ENCODE measurements at regions of chr18 and their contacts with region 1.

Region 1: DNA sequence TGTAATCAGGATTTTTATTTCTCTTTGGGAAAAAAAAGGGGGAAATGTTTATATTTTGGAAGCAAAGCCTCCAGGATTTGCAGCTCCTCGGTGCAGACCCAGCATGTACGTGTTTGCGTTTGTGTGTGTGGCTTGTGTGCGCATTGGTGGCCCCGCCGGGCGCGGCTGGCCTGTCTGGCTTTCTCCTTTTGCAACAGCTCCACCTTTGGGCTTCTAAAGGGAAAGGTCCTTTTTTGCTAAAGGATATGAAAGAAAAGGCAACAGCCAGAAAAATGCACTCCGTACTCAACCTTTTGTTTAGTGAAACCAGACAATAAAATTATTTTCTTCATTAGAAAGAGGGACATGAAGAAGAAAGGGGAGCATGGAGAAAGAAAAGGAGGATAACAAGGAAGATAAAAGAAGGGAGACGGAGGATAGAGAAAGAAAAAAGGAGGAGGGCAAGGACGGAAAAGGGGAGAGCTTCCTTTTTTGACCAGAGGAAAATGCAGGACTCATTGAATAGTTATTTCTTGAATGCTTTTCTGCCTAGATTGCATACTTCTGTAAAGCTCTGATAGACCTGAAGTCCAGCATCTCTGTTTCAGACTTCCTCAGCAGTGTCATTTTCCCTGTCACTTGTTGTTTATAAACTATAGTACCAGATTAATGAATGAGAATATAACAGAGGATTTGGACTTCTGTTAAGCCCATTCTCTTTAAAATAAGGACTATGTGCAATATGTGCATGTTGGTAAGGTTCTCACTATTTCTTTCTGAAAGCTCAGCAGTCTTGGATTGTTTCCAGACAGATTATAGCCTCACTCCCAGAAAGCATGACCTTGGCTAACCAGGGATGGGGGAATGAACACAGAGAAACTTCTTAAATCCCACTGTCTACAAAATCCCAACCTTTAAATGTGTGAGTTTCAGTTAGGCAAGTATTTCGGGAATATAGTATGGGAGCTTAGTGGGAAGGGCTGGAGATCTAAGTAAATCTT is 563.1 kb upstream of the PIK3C3 start:
- DNase-seq: peak in 3 of 5 donors; percentile 7 to 67 (median 59)
- ATAC-seq: peak; percentile 66 to 77 (median 70)
- H3K4me3 ChIP-seq: peak overlapping the region in 6 of 12 donors; percentile 27 to 45 (median 30)
- H3K27ac ChIP-seq: no peak overlapping the region
- H3K4me1 ChIP-seq: peaks cover 0 to 5% (median 0%) of the 10 kb centered on the region in 12 donors
- H3K27me3 ChIP-seq: no peaks in the 10 kb centered on the region
- CTCF ChIP-seq: peak; percentile 15 to 61 (median 50)
- POLR2A ChIP-seq: no peak

Region 2: DNA sequence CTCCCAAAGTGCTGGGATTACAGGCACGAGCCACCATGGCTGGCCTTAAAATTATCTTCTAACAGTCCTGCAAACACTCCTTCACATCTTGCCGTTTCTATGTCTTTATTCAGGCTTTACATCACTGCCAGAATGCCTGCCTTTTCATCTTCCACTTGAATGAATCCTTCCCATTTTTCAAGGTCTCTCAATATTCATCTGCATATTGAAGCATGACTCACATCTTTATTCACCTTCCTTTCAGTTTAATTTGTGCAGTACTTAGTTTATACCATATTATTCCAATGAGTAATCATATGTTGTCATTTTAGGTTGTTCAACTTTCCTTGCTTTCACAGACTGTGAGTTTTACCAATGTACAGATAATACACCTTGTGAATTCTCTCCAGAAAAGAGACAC is 53.0 kb after region 1 on chr18:
- intact Hi-C with region 1: loop called in 1 of 10 experiments (anchors 5 kb)
- DNase-seq: no peak
- ATAC-seq: no peak
- H3K4me3 ChIP-seq: no peak overlapping the region
- H3K27ac ChIP-seq: no peak overlapping the region
- H3K4me1 ChIP-seq: no peaks in the 10 kb centered on the region
- H3K27me3 ChIP-seq: no peaks in the 10 kb centered on the region
- CTCF ChIP-seq: no peak
- POLR2A ChIP-seq: no peak

Region 3: DNA sequence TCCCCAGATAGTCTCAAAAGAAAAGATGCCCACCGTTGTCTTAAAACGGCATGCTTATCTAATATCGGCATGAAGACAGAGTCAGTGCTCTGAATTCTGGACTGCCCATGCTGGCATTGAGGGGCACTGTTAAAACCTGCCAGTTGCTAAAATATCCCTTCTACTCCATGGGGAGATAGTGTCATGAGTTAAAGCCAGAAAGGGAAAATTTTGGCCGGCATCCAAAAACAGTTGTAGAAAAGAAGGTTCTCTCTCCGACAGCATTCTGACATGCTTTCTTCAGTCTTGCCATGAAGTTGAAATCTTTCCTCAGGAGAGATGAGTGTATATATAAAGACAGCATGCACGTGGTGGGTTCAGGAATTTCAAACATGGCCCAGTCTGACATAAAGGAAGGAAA is 161.8 kb after region 1 on chr18:
- intact Hi-C with region 1: no loop called
- DNase-seq: peak in 1 of 5 donors; percentile 37
- ATAC-seq: peak in 1 of 4 donors; percentile 24
- H3K4me3 ChIP-seq: no peak overlapping the region
- H3K27ac ChIP-seq: no peak overlapping the region
- H3K4me1 ChIP-seq: peaks cover 0 to 5% (median 0%) of the 10 kb centered on the region in 12 donors
- H3K27me3 ChIP-seq: no peaks in the 10 kb centered on the region
- CTCF ChIP-seq: no peak
- POLR2A ChIP-seq: no peak

Region 4: GRCh38 chr18:41745166-41746049 is 353.5 kb after region 1 on chr18:
- intact Hi-C with region 1: loop called in 1 of 10 experiments (anchors 5 kb)
- DNase-seq: peak; percentile 11 to 60 (median 25)
- ATAC-seq: peak; percentile 53 to 75 (median 65)
- H3K4me3 ChIP-seq: no peak overlapping the region
- H3K27ac ChIP-seq: no peak overlapping the region
- H3K4me1 ChIP-seq: no peaks in the 10 kb centered on the region
- H3K27me3 ChIP-seq: no peaks in the 10 kb centered on the region
- CTCF ChIP-seq: peak; percentile 25 to 66 (median 56)
- POLR2A ChIP-seq: no peak